GM10248 (cell line): ENCODE measurements at regions of chr12 and their contacts with region 1.

Region 1: GRCh38 chr12:110513842-110514241 is 11.7 kb downstream of the RAD9B start:
- DNase-seq: no peak
- CTCF ChIP-seq: no peak

Region 2: DNA sequence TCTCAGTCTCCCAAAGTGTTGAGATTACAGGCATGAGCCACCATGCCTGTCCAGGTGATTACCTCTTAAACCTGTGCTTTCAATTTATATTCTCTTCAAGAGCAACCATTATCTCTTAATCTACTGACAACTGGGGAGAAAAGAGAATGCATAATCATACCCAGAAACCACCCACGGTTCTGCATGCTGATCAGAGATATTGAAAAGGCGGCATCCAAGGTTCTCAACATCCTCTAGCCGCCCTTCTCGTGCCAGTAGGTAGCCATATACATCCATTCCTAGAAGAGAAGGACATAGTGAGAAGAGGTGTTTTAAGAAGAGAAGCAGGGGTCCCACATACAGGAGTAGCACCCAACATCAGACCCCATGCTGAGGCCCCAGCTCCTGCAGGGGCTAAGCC is 131.2 kb before region 1 on chr12:
- CTCF ChIA-PET with region 1: no interaction called
- POLR2A ChIA-PET with region 1: no interaction called
- DNase-seq: no peak
- CTCF ChIP-seq: no peak

Region 3: DNA sequence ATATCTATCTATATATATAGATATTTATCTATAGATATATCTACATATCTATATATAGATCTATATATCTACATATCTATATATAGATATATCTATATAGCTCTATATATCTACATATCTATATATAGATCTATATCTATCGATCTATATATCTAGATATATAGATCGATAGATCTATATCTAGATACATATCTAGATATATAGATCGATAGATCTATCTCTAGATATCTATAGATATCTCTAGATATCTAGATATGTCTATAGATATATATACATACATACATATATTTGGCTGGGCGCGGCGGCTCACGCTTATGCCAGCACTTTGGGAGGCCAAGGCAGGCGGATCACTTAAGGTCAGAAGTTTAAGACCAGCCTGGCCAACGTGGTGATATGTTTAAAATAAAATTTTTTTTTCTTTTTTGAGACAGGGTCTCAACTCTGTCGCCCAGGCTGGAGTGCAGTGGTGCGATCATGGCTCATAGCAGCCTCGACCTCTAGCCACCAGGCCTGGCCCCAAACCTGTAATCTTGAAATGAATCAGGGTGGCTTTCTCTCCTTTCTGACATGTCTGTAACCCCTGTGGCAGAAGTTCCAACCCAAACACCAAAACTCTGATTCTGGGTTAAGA is 81.8 kb before region 1 on chr12:
- CTCF ChIA-PET with region 1: no interaction called
- POLR2A ChIA-PET with region 1: no interaction called
- DNase-seq: no peak
- CTCF ChIP-seq: no peak

Region 4: DNA sequence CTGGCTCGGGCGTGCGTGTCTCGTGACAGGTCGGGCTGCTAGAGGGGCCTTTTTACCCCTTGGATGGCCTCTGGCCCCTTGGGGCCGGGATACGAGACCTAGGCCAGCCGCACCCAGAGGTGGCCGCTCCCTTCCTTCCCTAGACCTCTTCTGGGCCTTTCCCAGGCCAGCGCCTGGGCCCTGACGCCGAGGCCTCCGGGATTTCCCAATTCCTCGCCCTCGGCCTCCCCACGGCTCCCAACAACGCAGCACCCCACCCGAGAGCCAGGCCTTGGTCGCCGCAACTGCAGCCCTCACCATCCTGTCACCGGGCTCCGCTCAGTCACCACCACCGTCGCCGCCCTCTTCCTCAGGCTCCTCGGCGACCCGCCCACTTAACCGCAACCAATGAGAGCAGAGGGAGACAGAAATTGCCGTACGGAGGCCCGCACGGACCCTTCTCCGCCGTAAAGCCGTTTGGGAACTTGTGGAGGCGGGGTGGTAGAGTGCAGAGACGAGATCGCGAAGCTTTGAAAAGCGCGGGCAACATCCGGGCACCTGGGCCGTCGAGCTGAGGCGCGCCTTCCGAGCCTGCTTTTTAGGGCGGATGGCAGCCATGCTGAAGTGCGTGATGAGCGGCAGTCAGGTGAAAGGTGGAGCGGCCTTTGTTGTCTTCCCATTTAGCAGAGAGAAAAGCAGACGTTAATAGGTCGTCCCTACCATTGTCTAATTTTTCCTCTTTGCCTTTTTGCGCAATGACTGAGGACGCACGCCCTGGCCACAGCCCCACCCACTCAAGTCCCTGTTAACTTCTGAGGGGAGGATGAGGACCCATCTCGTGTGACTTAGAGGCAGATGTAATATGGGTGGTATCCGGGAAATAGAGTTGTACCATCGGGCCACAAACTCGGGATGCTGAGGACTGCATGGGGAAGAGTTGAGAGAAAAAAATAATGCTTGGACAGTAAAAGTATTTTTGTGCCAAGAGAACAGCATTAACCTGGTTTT is 11.8 kb before region 1 on chr12 and contains the starts of genes RAD9B and VPS29:
- CTCF ChIA-PET with region 1: interaction called, 15 read pairs
- POLR2A ChIA-PET with region 1: no interaction called
- DNase-seq: peak; percentile 94
- CTCF ChIP-seq: no peak

Region 5: GRCh38 chr12:110627500-110628195 is 113.8 kb after region 1 on chr12:
- CTCF ChIA-PET with region 1: no interaction called
- POLR2A ChIA-PET with region 1: no interaction called
- DNase-seq: no peak
- CTCF ChIP-seq: no peak

Region 6: GRCh38 chr12:110937104-110937641 is 423.3 kb after region 1 on chr12:
- CTCF ChIA-PET with region 1: no interaction called
- POLR2A ChIA-PET with region 1: no interaction called
- DNase-seq: peak; percentile 80
- CTCF ChIP-seq: peak; percentile 98